Calu3 (cell line): ENCODE measurements at regions of chr6 and their contacts with region 1.

Region 1: DNA sequence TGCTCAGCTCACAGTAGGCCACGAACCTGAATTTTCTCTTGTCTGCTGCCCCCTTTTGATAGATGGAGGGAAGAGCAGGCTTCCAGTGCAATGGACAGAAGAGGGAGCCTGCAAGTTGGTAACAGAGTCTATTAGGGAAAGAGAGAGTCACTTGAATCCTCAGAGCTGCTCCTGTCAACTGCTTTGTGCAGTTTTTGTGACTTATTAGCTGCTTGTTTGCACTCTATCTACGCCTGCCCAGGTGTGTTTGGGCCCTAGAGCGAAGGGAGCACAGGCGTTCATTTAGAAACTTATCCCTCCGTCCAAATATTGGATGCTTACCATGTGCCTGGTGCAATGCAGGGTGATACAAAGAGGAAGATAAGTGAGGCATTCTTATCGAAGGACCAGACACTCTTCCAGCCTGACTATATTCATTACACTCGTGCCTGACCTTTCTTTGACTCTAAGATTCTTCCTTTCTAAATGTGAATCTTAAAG is 11.6 kb upstream of the SLC2A12 start:
- DNase-seq: peak; percentile 77
- H3K4me3 Mint-ChIP-seq: no peak overlapping the region
- H3K27ac Mint-ChIP-seq: no peak overlapping the region
- H3K4me1 Mint-ChIP-seq: peaks cover 36% of the 10 kb centered on the region
- H3K27me3 Mint-ChIP-seq: no peaks in the 10 kb centered on the region
- CTCF ChIP-seq: peak; percentile 69

Region 2: DNA sequence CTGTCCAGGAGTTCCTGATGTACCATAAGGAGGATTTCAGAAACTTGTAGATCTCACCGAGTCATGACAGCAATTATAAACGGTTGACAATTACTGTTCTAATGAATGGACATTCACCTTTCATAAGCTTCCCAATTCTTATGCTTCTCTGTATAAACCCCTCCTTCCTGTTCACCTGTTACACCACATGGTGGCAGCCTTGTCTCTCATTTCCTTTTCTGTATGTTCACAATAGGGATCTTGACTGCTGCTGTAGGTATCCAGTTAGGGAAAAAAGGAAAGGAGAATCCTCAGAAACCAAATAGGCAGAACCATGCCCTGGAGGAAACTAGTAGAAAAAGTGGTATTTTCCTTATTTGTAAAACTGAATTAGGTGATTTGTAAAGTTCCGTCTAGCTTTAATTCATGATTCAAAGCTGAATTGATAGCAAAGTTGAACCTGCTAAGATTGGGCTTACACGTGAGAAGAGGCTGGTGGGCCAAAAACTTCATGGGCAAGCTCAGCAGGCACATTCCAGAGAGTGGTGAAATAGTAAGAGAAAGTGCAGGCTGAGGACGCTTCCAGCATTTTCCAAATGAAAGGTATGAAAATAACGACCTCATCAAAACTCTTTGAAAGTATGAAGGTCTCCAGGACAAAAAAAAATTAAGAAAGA is 139.9 kb before region 1 on chr6:
- CTCF ChIA-PET with region 1: interaction called, 8 read pairs
- intact Hi-C with region 1: loop called (anchors 1 kb)
- DNase-seq: peak; percentile 70
- H3K4me3 Mint-ChIP-seq: no peak overlapping the region
- H3K27ac Mint-ChIP-seq: no peak overlapping the region
- H3K4me1 Mint-ChIP-seq: no peaks in the 10 kb centered on the region
- H3K27me3 Mint-ChIP-seq: no peaks in the 10 kb centered on the region
- CTCF ChIP-seq: peak; percentile 70

Region 3: DNA sequence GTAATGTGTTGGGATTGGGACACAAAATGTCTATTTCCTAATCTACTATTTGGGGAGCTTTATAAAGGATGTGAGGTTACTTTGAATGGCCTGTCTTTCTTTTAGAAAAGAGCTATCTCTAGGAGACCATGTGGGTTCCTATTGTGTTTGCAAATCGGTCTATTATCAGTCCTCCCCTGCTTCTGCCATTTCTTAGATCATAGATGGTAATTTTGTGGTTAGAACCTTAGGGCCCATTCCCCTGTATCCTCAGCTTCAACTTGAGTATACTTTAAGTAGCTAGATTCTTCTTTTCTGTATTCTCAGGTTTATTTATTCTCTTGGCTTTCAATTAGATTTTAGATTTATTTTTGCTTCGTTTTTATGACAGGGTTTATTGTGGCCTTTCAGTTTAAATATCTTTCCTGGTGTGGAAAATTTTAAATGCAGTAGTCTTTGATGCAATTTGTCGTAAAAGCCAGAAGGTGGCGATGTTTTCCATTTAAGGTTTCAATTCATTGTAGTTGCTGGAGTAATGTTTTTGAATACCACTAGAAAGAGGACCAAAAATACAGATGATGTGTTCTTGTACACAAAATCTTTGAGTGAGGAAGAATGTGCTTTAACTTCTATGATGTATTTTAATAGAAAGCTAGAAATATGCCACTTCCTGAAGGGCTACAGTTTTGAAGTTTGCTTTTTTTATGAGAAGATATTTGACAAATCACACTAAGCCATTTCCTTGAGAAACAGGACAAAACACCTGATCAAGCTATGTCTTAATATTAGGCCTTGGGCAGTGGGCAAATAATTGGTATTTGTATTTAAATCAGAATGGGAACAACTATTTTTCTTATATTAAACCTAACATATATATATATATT is 90.7 kb before region 1 on chr6:
- CTCF ChIA-PET with region 1: interaction called, 35 read pairs
- intact Hi-C with region 1: loop called (anchors 1 kb)
- DNase-seq: no peak
- H3K4me3 Mint-ChIP-seq: no peak overlapping the region
- H3K27ac Mint-ChIP-seq: peak overlapping the region; percentile 44
- H3K4me1 Mint-ChIP-seq: peaks cover 44% of the 10 kb centered on the region
- H3K27me3 Mint-ChIP-seq: no peaks in the 10 kb centered on the region
- CTCF ChIP-seq: peak; percentile 32

Region 4: DNA sequence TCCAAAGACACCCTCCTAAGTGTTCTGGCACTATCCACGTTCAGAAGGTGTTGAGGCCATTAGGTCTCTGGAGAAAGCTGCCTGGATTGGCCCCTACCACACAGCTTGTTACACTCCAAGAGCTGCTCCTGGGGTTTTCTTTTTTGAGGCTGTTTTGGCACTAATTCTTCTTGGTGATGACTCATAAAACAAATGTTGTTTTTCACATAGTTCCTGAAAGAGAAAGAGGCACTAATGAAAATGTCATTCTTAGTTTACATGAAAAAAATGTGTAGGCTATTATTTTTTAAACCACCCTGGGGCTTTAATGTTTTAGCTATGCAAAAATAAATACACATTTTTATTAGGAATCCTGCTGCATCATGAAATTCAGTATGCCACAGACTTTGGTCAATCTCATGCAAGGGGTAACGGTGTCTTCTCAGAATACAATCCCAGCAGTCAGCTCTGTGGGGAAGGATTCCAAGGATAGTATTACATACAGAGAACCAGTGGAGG is 72.9 kb before region 1 on chr6:
- CTCF ChIA-PET with region 1: interaction called, 13 read pairs
- intact Hi-C with region 1: no loop called
- DNase-seq: no peak
- H3K4me3 Mint-ChIP-seq: no peak overlapping the region
- H3K27ac Mint-ChIP-seq: no peak overlapping the region
- H3K4me1 Mint-ChIP-seq: no peaks in the 10 kb centered on the region
- H3K27me3 Mint-ChIP-seq: no peaks in the 10 kb centered on the region
- CTCF ChIP-seq: no peak

Region 5: GRCh38 chr6:134029495-134030455 is 34.2 kb before region 1 on chr6:
- CTCF ChIA-PET with region 1: interaction called, 13 read pairs
- intact Hi-C with region 1: no loop called
- DNase-seq: no peak
- H3K4me3 Mint-ChIP-seq: no peak overlapping the region
- H3K27ac Mint-ChIP-seq: no peak overlapping the region
- H3K4me1 Mint-ChIP-seq: peaks cover 73% of the 10 kb centered on the region
- H3K27me3 Mint-ChIP-seq: no peaks in the 10 kb centered on the region
- CTCF ChIP-seq: no peak

Region 6: DNA sequence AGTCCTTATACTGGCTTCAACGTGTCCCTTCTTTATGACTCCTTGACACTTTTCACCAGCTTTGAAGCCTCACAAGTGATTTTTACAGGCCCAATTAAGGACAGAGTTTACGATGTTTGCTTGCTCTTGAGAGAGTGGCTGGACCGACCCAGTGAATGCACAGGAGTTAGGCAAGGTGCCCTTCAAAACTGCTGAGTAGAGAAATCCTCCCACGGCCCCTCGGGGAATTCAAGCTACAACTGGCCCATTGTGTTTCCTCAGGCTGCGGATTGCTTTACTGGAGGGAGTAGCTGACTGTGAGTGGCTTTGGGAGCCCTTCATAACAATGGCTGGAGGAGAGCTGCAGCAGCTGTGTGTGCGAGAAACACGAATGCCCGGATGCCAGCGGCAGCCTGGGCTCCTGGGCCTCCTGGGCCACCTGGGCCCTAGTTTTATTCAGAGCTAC is 203.9 kb after region 1 on chr6:
- CTCF ChIA-PET with region 1: no interaction called
- intact Hi-C with region 1: no loop called
- DNase-seq: no peak
- H3K4me3 Mint-ChIP-seq: no peak overlapping the region
- H3K27ac Mint-ChIP-seq: no peak overlapping the region
- H3K4me1 Mint-ChIP-seq: no peaks in the 10 kb centered on the region
- H3K27me3 Mint-ChIP-seq: no peaks in the 10 kb centered on the region
- CTCF ChIP-seq: no peak